ENCODE measurements at regions of chr20 and their contacts with region 1.

Region 1: DNA sequence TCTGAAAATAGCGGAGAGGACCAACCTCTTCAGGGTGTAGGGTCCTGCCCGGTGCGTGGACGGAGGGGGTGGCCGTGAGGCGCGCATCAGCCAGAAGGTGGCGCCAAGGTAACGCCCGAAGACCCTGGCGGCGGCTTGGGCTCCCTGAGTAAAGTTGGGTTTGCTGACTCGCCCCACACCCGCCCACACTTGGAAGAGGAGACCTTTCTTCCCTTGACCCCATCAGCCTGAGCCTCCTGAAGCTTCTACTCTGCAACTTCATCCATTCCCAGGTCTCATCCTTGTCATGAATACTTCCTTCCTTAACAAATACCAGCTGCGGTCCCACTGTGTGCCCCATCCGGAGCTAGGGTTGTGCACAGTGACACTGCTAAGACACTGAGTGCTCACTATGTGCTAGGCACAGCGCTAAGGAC is 14.6 kb downstream of the CD40 start:
- DNase-seq: peak; percentile 91
- H3K4me3 ChIP-seq: no peak overlapping the region
- H3K27ac ChIP-seq: no peak overlapping the region
- H3K4me1 ChIP-seq: peaks cover 4 to 24% (median 11%) of the 10 kb centered on the region in 6 donors
- H3K27me3 ChIP-seq: peaks cover 0 to 72% (median 22%) of the 10 kb centered on the region in 7 donors
- CTCF ChIP-seq: peak; percentile 44 to 86 (median 78)
- POLR2A ChIP-seq: no peak

Region 2: GRCh38 chr20:46027245-46027853 is 105.4 kb before region 1 on chr20:
- intact Hi-C with region 1: no loop called
- DNase-seq: no peak
- H3K4me3 ChIP-seq: no peak overlapping the region
- H3K27ac ChIP-seq: no peak overlapping the region
- H3K4me1 ChIP-seq: peaks cover 3 to 18% (median 6%) of the 10 kb centered on the region in 6 donors
- H3K27me3 ChIP-seq: peaks cover 3 to 99% (median 55%) of the 10 kb centered on the region in 7 donors
- CTCF ChIP-seq: no peak
- POLR2A ChIP-seq: no peak

Region 3: DNA sequence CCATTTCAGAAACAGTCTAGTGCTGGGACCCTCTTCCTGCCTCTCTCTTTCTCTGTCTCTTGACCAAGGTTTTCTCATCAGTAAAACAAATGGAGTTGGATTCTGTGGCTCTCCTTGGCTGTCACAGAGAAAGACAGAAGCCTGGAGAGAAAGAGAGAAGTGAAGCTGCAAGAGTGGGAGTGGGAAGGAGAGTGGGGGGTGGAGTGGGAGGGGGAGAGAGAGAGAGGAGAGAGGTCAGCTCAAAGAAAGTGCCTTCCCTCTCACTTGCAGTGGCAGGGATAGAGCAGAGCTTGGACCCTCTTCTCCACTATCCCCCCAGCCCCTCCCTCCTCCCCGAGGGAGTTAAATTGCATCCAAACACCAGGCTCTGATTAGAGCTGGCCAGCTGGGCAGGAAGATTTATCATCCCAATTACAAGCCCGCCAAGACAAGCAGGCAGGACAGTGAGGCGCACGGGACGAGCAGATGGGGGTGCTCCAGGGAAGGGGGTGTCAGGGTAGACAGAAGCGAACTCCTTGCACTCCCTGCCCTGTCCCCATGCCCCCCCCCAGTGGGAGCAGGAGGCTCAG is 59.7 kb after region 1 on chr20:
- intact Hi-C with region 1: no loop called
- DNase-seq: no peak
- H3K4me3 ChIP-seq: no peak overlapping the region
- H3K27ac ChIP-seq: no peak overlapping the region
- H3K4me1 ChIP-seq: no peaks in the 10 kb centered on the region
- H3K27me3 ChIP-seq: peaks cover 0 to 75% (median 8%) of the 10 kb centered on the region in 7 donors
- CTCF ChIP-seq: no peak
- POLR2A ChIP-seq: no peak

Region 4: GRCh38 chr20:46307139-46307998 is 174.7 kb after region 1 on chr20:
- intact Hi-C with region 1: loop called (anchors 5 kb)
- DNase-seq: peak; percentile 93
- H3K4me3 ChIP-seq: peak overlapping the region; percentile 30 to 73 (median 50)
- H3K27ac ChIP-seq: no peak overlapping the region
- H3K4me1 ChIP-seq: peaks cover 9 to 30% (median 25%) of the 10 kb centered on the region in 6 donors
- H3K27me3 ChIP-seq: peaks cover 3 to 100% (median 57%) of the 10 kb centered on the region in 7 donors
- CTCF ChIP-seq: peak; percentile 60 to 90 (median 84)
- POLR2A ChIP-seq: no peak